Left colon (tissue), 2 donors: ENCODE measurements at regions of chr13 and their contacts with region 1.

Region 1: DNA sequence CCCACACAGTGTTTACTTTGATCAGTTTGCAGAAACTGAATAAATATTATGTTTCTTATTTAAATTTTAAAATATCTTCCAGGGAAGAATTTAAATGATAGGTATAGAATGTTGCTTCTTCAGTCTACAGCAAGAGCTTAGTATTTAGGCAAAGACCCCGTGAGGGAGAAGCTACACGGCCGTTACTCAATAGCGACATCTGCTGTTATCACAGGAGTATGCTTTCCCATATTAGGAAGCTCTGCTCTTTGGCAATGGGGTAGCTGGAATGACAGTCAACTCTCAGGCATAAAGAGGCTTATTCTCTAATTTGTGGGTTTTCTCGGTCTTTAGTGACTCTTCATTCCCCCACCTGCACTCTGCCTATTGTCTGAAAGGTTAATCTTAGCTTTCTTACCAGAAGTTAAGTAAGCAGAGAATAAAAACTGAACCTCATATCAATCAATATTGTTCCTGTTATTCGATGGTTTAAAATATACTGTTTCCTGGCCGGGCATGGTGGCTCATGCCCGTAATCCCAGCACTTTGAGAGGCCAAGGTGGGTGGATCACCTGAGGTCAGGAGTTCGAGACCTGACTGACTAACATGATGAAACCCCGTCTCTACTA is 13.2 kb upstream of the LHFPL6 start:
- DNase-seq: peak in 1 of 2 donors; percentile 8
- ATAC-seq: peak; percentile 56

Region 2: DNA sequence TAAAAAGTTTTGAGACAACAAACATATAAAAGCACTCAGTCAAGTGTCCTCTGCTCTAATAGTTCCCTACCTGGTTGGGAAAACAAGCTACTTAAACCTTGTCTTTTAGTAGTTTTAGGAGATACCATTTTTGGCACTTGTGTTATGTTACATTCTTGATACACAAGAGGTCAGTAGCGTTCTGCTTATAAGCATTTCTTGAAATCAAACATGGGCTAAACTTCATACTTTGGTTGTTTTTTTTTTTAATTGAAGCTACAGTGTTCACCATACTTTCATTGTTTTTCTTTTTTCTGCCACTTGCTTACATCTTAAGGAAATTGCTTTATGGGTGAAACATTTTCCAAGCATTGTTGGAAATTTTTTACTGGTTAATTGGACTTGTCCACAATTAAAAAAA is 565.0 kb before region 1 on chr13:
- intact Hi-C with region 1: loop called in 1 of 2 experiments (anchors 10 kb)
- DNase-seq: no peak
- ATAC-seq: no peak

Region 3: GRCh38 chr13:39144941-39145533 is 471.2 kb before region 1 on chr13:
- intact Hi-C with region 1: loop called in 1 of 2 experiments (anchors 5 kb)
- DNase-seq: peak in 1 of 2 donors; percentile 31
- ATAC-seq: peak; percentile 58

Region 4: GRCh38 chr13:39273953-39274738 is 342.0 kb before region 1 on chr13:
- intact Hi-C with region 1: loop called in 1 of 2 experiments (anchors 10 kb)
- DNase-seq: peak in 1 of 2 donors; percentile 23
- ATAC-seq: peak; percentile 73

Region 5: GRCh38 chr13:39415008-39415802 is 201.0 kb before region 1 on chr13:
- intact Hi-C with region 1: loop called in 1 of 2 experiments (anchors 10 kb)
- DNase-seq: peak in 1 of 2 donors; percentile 18
- ATAC-seq: no peak

Region 6: DNA sequence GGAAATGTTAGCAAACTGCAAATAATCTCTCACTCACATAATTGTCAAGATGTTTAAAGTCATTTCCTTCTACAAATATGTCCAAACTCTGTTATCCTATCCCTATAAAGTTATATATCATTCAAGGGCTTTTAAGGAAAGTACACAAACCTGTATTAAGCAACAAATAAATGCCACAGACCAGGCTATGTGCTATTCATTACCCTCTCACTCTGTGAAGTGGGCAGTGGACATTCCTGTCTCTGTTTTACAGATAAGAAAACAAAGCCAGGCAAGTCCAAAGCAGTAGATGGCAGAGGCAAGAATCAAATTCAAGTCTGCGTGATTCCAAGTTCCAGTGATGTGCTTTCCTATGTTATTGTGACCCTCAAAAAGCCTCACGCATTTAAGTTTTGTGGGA is 153.8 kb before region 1 on chr13:
- intact Hi-C with region 1: no loop called
- DNase-seq: no peak
- ATAC-seq: no peak

Region 7: DNA sequence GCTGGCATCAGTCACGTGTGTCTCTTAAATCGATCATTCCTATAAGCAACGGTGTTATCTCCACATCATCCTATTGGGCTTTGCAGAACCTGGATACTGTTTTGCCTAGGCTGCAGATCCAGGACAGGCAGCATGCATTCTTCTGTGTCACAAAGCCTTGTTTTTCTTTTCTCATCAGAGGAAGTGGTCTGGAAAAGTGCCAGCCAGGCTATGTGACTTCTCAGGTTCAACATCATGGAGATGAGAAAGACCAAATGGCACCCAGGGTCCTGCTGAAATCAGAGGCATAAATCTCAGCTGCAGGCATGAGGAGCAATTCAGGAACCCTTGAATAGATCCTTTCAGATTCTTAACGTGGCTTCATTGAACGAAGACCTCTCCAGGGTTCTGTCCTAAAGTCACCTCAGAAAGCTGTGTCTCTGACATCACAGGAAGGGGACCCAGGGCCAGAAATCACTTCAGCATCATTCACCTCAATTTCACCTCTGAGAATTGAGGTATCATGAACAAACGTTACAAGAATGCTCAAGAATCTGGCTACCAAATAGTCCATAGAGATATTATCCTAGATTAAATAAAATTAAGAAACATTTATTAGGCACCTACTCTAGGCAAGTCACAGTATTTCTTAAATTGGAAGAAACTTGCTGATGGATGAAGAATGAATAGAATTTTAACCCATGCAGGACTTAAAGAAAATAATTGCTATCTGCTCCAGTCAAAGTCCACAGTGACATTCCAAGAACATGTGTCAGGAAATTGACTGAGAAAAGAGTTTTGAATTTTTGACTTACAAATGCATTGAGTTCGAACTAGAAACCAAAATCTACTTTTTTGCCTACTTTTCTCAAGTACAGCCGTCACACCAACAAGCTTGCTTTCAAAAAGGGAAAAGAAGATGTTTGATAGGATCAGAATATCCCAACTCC is 163.4 kb after region 1 on chr13:
- intact Hi-C with region 1: no loop called
- DNase-seq: peak in 1 of 2 donors; percentile 15
- ATAC-seq: no peak